ENCODE measurements at regions of chr2 and their contacts with region 1.

Region 1: DNA sequence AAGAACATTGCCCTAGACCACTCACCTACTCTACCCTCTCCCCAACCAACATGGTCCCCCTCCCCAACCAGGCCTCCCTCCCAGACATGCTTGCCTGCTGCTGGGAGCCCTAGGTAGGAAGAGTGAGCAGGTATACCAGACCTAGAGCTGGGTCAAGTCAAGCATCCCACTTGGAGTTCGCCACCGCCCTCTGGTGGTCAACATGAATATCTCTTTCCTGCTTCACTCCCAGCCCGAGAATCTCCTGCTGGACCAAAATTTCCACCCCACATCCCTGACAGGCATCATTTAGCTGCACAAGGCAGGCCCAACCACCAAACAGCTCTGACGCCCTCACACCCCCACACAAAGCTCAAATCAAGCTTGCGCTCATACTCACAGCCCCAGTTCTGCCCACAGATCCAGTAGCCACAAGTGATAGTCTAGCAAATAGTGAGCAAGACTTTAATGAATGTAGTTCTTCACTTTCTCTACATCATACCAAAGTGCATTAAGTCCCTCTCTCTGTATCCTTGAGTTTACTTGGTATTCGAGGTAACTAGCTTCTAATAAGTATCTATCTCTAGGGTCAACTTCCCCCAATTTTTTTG is 116.0 kb downstream of the TNS1 start:
- DNase-seq: peak; percentile 51 to 86 (median 65)
- H3K4me3 ChIP-seq: no peak overlapping the region
- H3K27ac ChIP-seq: peak overlapping the region in 4 of 59 donors; percentile 10 to 19 (median 13)
- H3K27me3 ChIP-seq: no peaks in the 10 kb centered on the region
- CTCF ChIP-seq: peak; percentile 69 to 92 (median 86)

Region 2: GRCh38 chr2:217756375-217757107 is 130.3 kb before region 1 on chr2:
- intact Hi-C with region 1: no loop called
- DNase-seq: peak; percentile 64 to 87 (median 82)
- H3K4me3 ChIP-seq: peak overlapping the region; percentile 20 to 70 (median 52)
- H3K27ac ChIP-seq: peak overlapping the region in 10 of 59 donors; percentile 10 to 73 (median 27)
- H3K27me3 ChIP-seq: no peaks in the 10 kb centered on the region
- CTCF ChIP-seq: peak; percentile 66 to 99 (median 96)

Region 3: DNA sequence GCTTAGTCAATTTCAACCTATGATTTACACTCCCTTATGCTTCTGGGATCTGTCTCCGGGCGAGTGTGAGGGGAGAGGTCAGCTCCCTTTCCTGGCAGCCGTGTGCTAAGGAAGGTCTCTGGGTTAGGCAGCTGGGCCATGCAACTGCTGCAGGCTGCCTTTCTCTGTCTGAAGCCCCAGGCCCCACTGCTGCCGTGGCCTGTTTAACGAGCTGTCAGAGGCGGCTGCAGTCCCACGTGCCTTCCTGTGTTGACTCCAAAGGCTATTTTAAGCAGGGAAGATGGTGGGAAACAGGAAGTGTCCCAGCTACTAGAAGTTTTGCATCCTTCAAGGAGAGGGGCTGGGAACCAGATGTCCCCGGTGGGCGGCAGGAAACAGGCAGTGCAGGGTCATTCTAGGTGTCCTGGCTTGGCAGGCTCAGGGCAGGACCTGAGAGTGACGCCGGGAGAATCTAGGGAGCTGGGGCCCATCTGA is 70.4 kb before region 1 on chr2:
- intact Hi-C with region 1: no loop called
- DNase-seq: no peak
- H3K4me3 ChIP-seq: no peak overlapping the region
- H3K27ac ChIP-seq: peak overlapping the region in 18 of 59 donors; percentile 2 to 60 (median 23)
- H3K27me3 ChIP-seq: no peaks in the 10 kb centered on the region
- CTCF ChIP-seq: no peak

Region 4: GRCh38 chr2:217836901-217837491 is 49.8 kb before region 1 on chr2:
- intact Hi-C with region 1: loop called in 1 of 2 experiments (anchors 5 kb)
- DNase-seq: peak in 9 of 10 donors; percentile 68 to 89 (median 78)
- H3K4me3 ChIP-seq: peak overlapping the region in 2 of 59 donors; percentile 3 to 17
- H3K27ac ChIP-seq: peak overlapping the region in 49 of 59 donors; percentile 9 to 92 (median 69)
- H3K27me3 ChIP-seq: no peaks in the 10 kb centered on the region
- CTCF ChIP-seq: peak in 48 of 56 donors; percentile 12 to 66 (median 38)

Region 5: DNA sequence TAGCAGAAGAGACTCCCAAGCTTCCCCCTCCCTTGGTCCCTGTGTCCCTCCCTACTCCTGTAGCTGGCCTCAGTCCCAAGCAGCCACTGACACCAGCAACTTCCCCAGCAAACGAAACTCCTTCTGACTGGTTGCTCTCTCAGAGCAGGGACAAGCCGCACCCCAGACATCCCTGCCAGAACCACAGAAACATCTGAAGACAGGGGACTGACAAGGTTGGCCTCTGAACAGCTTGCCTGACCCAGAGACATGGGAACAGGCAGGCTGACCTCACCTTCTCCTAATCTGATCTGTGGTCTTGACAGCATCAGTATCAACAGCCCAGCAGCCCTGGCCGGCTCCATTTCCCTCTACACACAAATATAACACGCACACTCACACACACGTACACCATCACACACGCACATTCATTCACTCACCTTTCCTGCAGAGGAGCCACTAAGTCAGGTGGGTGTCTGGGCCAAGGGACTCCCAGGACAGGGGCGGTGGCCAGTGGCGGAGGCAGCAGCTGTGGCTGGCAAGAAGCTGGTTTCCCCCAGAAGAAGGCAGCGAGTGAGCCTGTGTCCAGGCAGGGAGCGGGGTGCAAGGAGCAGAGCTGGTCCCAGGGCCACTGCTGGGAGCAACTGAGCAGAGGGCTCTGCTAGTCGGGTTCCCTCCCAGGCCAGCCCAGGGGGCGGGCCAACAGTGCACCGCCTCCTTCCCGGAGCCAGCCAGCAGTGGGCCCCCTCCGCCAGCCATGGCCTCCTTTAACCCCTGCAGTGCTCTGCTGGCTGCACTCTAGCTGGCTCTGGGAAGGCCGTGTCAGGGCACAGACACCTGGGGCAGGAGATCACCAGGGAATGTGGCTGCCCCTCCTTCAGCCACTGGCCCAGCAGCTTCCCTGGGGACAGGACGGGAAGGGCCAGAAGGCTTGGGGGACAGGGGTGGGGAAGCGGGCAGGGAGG is 56.9 kb after region 1 on chr2:
- intact Hi-C with region 1: loop called in 1 of 2 experiments (anchors 5 kb)
- DNase-seq: peak; percentile 23 to 88 (median 78)
- H3K4me3 ChIP-seq: peak overlapping the region; percentile 45 to 88 (median 68)
- H3K27ac ChIP-seq: peak overlapping the region in 57 of 59 donors; percentile 10 to 91 (median 80)
- H3K27me3 ChIP-seq: no peaks in the 10 kb centered on the region
- CTCF ChIP-seq: peak in 52 of 56 donors; percentile 16 to 76 (median 52)

Region 6: GRCh38 chr2:217988014-217988839 is 101.4 kb after region 1 on chr2:
- intact Hi-C with region 1: loop called (anchors 1 to 2 kb)
- DNase-seq: peak; percentile 37 to 84 (median 80)
- H3K4me3 ChIP-seq: peak overlapping the region in 6 of 59 donors; percentile 10 to 36 (median 24)
- H3K27ac ChIP-seq: peak overlapping the region in 11 of 59 donors; percentile 10 to 53 (median 26)
- H3K27me3 ChIP-seq: no peaks in the 10 kb centered on the region
- CTCF ChIP-seq: peak; percentile 72 to 97 (median 90)